ENCODE measurements at regions of chr17 and their contacts with region 1.

Region 1: DNA sequence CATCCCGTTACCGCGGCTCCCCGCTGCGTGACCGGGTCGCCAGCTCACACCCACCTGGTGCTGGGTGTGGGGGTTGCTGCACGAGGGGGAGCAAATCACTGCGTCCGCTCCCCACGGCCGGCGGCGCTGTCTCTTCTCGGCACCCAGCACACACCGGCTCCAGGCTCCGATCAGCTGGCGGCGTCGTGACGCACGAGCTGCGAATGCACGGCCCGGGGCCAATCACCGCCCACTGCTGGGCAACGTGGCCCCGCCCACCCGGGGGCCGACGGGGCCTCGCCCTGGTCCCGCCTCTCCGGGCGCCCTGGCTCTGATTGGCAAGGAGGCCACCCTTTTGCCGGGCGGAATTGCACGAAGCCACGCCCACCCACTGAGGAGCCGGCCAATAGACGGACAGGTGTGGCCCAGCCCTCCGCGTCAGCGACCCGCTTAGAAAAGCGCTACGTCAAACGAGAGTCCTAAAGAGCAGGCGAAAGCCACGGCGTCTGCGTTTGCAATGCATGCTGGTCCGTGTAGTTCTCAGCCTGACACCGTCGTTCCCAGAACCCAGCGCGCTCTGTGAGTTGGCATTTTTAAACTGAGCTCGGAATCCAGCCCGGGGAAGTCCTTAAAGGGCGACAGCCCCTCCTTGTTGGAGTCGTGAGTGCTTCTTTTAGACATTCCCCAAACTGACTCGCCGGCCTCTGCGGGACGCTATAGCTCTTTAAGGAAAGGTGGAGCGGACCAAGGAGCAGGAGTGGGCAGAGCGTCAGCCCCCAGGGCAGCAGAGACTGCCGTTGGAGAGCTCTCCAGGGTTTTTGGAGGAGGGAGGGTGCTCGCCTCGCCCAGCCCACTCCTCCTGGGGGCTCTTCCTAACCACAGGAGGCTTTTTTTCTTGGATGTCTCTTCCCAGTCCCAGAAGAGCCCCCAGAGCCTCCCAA is 6.2 kb upstream of the TLCD2 start:
- DNase-seq: peak; percentile 99 to 100
- H3K4me3 ChIP-seq: peak overlapping the region; percentile 81
- H3K27ac ChIP-seq: peak overlapping the region; percentile 99
- H3K4me1 ChIP-seq: peaks cover 25% of the 10 kb centered on the region
- H3K27me3 ChIP-seq: no peaks in the 10 kb centered on the region
- CTCF ChIP-seq: peak; percentile 31; the same call in 1 of the 2 replicates

Region 2: GRCh38 chr17:1438593-1439083 is 277.7 kb before region 1 on chr17:
- CTCF ChIA-PET with region 1: no interaction called
- POLR2A ChIA-PET with region 1: interaction called, 11 read pairs
- intact Hi-C with region 1: no loop called
- DNase-seq: peak in 1 of 2 experiments; percentile 28
- H3K4me3 ChIP-seq: no peak overlapping the region
- H3K27ac ChIP-seq: peak overlapping the region; percentile 21
- H3K4me1 ChIP-seq: no peaks in the 10 kb centered on the region
- H3K27me3 ChIP-seq: no peaks in the 10 kb centered on the region
- CTCF ChIP-seq: no peak

Region 3: DNA sequence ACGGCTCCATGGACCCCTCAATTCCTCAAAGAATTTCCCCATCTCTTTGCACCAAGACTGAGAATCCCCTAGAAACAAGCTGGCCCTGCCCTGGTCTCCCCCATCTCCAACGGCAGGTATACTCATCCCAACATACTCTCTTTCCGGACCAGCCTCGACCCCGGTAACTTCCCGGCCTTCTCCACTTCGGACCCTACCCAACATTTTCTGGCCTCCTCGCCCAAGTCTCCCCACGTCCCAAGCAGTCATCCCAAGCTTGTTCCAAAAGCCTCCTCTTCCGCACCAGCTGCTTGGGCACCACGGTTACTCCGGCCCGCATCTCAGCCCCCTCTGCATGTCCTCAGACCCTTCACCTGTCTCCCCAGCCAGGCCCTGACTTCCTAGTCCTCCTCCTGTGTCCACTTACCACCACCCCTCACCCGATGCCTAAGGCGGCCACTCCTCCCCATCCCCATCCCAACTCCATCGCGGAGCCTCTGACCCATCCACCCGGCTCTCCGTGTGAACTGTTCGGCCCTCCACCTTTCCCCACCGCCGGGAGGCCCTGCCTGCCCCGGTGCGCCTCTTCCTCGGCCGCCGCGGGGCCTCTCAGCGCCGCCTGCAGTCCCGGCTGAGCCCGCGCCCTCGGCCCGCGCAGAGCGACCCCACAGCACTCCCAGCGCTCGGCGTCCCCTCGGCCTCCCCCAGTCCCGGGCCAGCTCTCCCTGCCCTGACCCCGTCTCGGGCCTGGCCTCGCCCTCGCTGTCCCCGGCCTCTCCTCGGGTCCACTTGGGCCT is 154.7 kb before region 1 on chr17:
- CTCF ChIA-PET with region 1: no interaction called
- POLR2A ChIA-PET with region 1: no interaction called
- intact Hi-C with region 1: loop called (anchors 2 kb)
- DNase-seq: peak in 1 of 2 experiments; percentile 36
- H3K4me3 ChIP-seq: peak overlapping the region; percentile 92
- H3K27ac ChIP-seq: no peak overlapping the region
- H3K4me1 ChIP-seq: peaks cover 21% of the 10 kb centered on the region
- H3K27me3 ChIP-seq: no peaks in the 10 kb centered on the region
- CTCF ChIP-seq: no peak; the same call in 1 of the 2 replicates

Region 4: DNA sequence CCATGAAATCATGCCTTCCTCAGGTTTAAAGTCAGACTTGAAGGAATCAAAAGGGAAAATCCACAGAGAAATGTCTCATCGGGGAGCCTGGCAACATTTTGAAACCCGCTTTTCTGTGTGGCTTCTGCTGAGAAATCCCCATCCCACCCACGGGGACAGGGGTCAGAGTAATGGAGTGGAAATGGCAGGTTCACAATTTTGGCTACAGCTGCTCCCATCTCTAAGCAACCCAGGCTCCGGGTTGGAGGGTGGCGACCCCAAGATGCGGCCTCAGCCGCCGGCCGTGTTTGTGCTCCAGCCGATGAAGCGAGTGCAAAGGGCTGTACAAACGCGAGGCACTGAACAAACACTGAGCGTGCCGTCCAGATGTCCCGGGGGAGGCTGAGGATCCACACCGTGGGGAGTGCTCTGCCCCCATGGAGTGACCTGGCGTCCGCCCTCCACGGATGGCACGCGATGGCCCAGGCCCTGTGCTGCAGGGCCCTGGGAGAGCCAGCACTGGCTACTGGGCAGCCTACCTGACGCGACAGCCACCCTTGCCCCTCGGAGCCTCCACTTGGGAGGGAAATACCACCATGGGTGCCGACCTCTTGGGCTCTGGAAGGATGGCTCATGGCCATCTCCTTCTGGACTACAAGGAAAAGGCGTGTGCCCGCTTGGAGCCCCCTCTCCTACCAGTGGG is 109.8 kb before region 1 on chr17:
- CTCF ChIA-PET with region 1: no interaction called
- POLR2A ChIA-PET with region 1: no interaction called
- intact Hi-C with region 1: no loop called
- DNase-seq: no peak
- H3K4me3 ChIP-seq: no peak overlapping the region
- H3K27ac ChIP-seq: no peak overlapping the region
- H3K4me1 ChIP-seq: no peaks in the 10 kb centered on the region
- H3K27me3 ChIP-seq: no peaks in the 10 kb centered on the region
- CTCF ChIP-seq: no peak

Region 5: DNA sequence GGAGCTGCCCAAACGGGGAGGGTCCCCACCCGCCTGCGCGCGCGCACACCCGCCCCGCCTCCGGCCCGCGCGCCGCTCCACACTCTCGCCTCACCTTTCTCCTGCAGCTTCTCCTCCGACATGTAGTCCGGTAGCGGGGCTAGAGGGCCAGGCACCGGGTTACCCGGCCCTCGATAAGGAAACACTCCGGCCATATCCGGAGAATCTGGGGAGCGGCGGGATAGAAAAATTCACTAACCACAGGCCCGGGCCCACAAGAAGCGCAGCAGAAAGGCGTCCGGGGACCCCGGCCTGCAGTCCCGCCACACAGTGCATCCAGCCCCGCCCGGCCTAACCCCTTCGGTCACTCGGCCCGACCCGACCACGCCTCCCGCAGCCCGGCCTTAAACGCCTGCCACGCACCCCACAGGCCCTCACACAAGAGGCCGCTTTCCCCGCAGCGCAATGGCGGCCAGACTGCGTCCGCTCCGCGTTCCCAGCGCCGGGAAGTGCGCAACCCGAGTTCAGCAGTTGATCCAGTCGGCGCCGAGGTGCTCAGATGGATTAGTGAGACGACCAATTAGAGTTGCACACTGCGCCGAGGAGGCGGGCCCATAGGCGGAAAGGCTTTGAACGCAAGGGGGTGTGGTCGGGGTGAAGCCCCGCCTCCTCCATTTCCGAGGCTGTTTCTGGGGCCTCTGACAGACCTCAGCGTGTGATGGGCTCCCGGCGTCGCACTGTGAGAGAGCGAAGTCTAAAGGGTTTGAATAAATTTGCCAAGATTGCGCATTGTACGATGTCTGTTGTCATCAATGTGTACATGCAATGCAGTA is 31.8 kb before region 1 on chr17 and contains the start of gene PRPF8:
- CTCF ChIA-PET with region 1: interaction called, 8 read pairs
- POLR2A ChIA-PET with region 1: interaction called, 8 read pairs
- intact Hi-C with region 1: loop called (anchors 1 kb)
- DNase-seq: peak; percentile 93 to 99
- H3K4me3 ChIP-seq: peak within 1 kb of the TSS; percentile 77
- H3K27ac ChIP-seq: peak within 1 kb of the TSS; percentile 59
- H3K4me1 ChIP-seq: peaks cover 29% of the 10 kb centered on the region
- H3K27me3 ChIP-seq: no peaks in the 10 kb centered on the region
- CTCF ChIP-seq: no peak
- total RNA-seq, gene PRPF8: 437 and 496 TPM in 2 replicates

Region 6: GRCh38 chr17:1829592-1830257 is 113.4 kb after region 1 on chr17 and contains the starts of genes RPA1 and SMYD4:
- CTCF ChIA-PET with region 1: no interaction called
- POLR2A ChIA-PET with region 1: interaction called, 11 read pairs
- intact Hi-C with region 1: loop called (anchors 2 kb)
- DNase-seq: peak; percentile 70 to 92
- H3K4me3 ChIP-seq: peak within 1 kb of the TSS; percentile 96
- H3K27ac ChIP-seq: peak within 1 kb of the TSS; percentile 27; the same call in 1 of the 2 replicates
- H3K4me1 ChIP-seq: peaks cover 18% of the 10 kb centered on the region
- H3K27me3 ChIP-seq: no peaks in the 10 kb centered on the region
- CTCF ChIP-seq: no peak
- total RNA-seq, gene RPA1: 201 and 212 TPM in 2 replicates
- total RNA-seq, gene SMYD4: 19.0 and 23.3 TPM in 2 replicates

Region 7: GRCh38 chr17:2029911-2030778 is 313.8 kb after region 1 on chr17 and contains the start of gene DPH1:
- CTCF ChIA-PET with region 1: interaction called, 3 read pairs
- POLR2A ChIA-PET with region 1: interaction called, 13 read pairs
- intact Hi-C with region 1: no loop called
- DNase-seq: peak; percentile 83 to 91
- H3K4me3 ChIP-seq: peak within 1 kb of the TSS; percentile 97
- H3K27ac ChIP-seq: no peak within 1 kb of the TSS
- H3K4me1 ChIP-seq: peaks cover 15% of the 10 kb centered on the region
- H3K27me3 ChIP-seq: 0 out of 2 replicates have a peak, but pooled peaks cover 7% of the 10 kb centered on the region
- CTCF ChIP-seq: no peak
- total RNA-seq, gene DPH1: 36.7 and 44.9 TPM in 2 replicates

Region 8: DNA sequence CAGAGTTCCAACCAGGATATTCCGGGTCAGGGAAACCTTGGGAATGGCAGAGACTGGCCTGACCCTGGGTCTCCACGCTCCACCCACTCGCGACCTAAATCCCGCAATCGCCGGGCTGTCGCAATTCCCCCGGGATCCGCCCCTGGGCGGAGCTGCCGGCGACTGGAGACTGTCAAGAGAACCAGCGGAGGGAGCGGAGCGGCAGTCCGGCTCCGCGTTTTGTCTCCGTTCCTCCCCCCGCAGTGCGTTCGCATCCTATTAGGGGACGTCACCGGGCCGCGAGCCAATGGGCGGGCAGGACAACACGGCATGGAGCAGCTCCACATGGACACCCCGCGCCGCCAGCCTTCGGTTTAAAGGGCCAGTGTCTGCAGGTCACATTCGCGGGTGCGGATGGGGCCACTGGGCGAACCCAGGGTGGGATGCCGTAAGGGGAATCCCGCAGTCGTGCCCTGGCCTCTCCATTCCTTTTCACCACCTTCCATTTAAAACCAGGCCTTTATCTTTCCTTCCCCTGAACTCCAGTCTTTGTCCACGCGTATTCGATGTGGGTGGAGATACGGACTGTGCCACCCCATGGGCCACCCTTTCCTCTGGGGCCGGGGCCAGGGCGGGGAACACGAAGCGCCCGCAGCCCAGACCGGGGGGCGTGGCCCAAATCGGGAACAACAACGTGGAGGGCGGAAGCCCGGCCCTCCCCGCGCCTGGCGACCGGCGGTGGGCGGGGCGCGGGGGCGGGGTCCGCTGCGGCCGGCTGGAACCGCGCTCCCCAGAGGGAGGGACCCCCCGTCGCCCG is 685.3 kb after region 1 on chr17:
- CTCF ChIA-PET with region 1: no interaction called
- POLR2A ChIA-PET with region 1: no interaction called
- intact Hi-C with region 1: loop called (anchors 2 kb)
- DNase-seq: peak; percentile 97 to 100
- H3K4me3 ChIP-seq: peak overlapping the region; percentile 96
- H3K27ac ChIP-seq: peak overlapping the region; percentile 96
- H3K4me1 ChIP-seq: peaks cover 65% of the 10 kb centered on the region
- H3K27me3 ChIP-seq: no peaks in the 10 kb centered on the region
- CTCF ChIP-seq: no peak